ENCODE measurements at regions of chr17 and their contacts with region 1.

Region 1: DNA sequence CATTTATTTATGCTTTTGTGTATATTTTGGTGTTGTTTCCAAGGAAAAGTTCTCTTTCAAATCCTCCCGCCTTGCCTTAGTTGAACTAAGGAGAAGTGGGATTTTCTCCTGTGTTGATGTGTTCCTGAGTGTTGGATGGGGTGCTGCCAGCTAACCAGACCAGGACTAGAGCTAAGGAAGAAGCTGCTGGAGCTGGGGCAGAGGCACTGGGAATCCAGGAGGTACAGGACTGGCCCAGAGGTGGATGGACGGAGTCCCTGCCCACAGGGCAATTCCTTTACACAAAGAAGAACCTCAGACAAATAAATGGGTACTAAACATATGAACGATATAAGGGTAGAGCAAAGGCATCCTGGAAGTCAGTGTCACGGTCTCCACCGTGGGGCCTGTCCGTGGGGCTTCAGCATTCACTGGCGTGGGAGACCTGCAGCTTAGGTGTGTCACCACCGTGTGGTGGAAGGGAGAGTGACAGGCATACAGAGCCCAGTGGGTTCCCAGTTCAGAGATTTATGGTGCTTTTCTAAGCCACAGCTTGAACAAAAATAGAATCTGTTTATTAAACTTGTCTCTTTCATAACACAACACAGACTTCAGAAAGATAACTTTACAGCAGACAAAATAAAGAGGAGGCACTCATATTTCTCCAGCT is 270.7 kb downstream of the NTN1 start:
- DNase-seq: peak; percentile 28 to 60
- ATAC-seq: peak; percentile 95 to 98
- H3K4me3 ChIP-seq: no peak overlapping the region
- H3K27ac ChIP-seq: no peak overlapping the region
- H3K4me1 ChIP-seq: no peaks in the 10 kb centered on the region
- CTCF ChIP-seq: peak; percentile 62
- EP300 ChIP-seq: no peak
- POLR2A ChIP-seq: no peak
- RAD21 ChIP-seq: peak; percentile 60 to 64

Region 2: DNA sequence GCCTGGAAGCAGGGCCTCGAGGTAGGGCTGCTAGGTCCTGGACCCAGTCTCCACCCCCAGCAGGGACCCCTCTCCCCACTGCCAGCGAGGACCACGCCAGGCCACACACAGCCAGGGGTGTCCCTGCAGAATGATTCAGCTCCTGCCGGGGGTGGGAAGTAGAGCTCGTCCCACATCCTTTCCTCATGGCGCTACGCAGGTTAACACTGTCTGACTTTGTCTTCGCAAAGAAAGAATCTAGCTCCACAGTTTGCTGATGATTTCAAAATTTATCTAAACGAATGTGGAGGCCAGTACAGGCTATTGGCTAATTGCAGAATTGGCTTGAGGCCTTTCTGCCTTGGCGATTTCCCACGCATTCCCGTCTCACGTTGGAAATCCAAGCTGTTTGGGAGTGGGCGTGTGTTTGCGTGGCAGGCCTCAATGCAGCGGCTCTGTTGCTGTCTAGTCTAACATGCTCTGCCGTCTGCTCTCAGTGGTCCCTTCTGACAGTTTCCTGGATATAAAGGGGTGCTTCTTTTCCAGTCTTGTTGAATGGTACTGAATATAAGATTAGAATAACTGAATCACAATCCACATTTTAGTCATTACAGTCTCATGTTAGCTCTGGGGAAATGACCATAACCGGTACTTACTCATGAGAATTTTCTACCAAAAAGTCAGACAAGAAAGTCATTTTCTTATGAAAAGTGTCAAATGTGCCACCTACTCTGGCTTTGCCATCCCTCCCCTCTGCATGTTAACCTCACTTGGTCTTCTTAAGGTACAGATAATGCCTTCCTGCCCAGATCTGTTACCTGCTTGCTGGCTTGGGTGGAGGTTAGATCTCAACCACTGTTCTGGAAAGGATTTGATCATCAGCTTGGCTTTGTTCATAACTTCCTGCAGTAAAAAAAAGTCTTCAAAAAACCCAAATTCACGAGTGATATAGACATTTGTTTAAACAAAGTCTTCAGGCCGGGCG is 18.3 kb before region 1 on chr17:
- CTCF ChIA-PET with region 1: interaction called, 15 read pairs
- POLR2A ChIA-PET with region 1: no interaction called
- DNase-seq: no peak
- ATAC-seq: peak in 1 of 2 experiments; percentile 39; a peak in 1 of 6 replicates
- H3K4me3 ChIP-seq: no peak overlapping the region
- H3K27ac ChIP-seq: no peak overlapping the region
- H3K4me1 ChIP-seq: no peaks in the 10 kb centered on the region
- CTCF ChIP-seq: no peak
- EP300 ChIP-seq: no peak
- POLR2A ChIP-seq: no peak
- RAD21 ChIP-seq: no peak